Cardiac septum (tissue), 1 donor: ENCODE measurements at regions of chr7 and their contacts with region 1.

Region 1: GRCh38 chr7:80095545-80095944 is 39.1 kb upstream of the GNAI1 start:
- DNase-seq: no peak

Region 2: GRCh38 chr7:80197627-80198026 is 102.1 kb after region 1 on chr7:
- intact Hi-C with region 1: no loop called
- DNase-seq: no peak

Region 3: DNA sequence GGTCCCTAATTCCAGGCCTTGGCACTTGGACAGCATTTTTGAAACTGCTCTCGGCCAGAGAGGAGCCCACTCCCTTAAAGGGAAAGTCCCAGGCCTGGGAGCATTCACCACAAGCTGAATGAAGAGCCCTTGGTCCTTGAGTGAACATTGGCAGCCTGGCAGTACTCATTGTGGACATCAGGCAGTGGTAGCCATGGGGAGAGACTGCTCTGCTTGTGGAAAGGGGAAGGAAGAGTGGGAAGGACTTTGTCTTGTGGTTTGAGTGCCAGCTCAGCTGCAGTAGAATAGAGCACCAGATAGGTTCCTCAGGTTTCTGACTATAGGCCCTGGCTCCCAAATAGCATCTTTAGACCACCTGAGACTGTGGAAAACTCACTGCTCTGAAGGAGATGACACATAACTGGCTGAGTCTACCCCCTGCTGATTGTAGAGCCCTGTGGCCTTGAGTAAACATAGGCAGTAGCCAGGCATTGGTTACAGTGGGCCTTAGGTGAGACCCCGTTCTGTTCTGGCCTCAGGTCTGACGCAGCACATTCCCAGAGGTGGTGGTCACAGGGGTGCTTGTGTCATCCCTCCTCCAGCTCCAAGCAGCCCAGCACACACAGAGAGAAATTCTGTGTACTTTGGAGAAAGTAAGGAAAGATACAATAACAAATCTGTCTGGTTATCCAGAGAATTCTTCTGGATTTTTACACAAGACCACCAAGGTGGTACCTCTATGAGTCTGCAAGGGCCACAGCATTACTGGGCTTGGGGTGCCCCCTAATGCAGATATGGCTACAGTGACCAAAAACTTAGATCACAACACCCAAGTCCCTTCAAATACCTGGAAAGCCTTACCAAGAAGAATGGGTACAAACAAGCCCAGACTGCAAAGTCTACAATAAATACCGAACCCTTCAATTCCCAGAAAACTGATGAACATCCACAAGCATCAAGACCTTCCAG is 192.9 kb after region 1 on chr7:
- intact Hi-C with region 1: loop called (anchors 10 kb)
- DNase-seq: no peak

Region 4: GRCh38 chr7:80392229-80393169 is 297.0 kb after region 1 on chr7:
- intact Hi-C with region 1: loop called (anchors 10 kb)
- DNase-seq: no peak